ENCODE measurements at regions of chr5 and their contacts with region 1.

Region 1: DNA sequence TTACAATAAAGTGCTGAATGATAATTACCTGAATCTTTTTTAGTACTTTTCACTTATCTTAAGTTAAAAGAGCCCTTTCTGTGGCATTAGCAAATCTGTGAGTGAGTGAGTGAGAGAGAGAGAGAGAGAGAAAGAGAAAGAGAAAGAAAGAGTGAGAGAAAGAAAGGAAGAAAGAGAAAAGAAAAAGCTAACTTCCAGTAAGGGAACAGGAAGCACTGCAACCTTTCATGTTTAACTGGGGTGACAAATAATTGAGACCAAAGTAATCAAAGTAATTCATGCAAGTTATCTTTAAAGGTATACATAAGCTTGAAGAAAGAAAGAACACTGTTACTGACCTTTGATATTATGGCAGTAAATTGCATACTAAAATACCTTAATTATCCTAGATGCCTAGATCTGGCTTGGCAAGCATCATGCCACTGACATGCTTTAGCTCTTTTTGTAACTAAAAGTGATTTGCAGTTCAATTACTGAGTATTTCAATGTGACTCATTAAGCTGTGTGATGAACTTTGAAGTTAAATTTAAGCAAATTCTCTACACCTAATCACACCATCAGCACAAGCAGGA is 21.7 kb downstream of the FEM1C start:
- DNase-seq: no peak
- H3K4me3 ChIP-seq: no peak overlapping the region
- H3K4me3 Mint-ChIP-seq: peak overlapping the region in 4 of 8 donors; percentile 1 to 40 (median 2)
- H3K27ac ChIP-seq: no peak overlapping the region
- H3K27ac Mint-ChIP-seq: peak overlapping the region in 2 of 7 donors; percentile 6 to 50
- H3K4me1 ChIP-seq: peaks cover 13% of the 10 kb centered on the region
- H3K4me1 Mint-ChIP-seq: peaks cover 26 to 43% (median 31%) of the 10 kb centered on the region in 4 donors
- H3K27me3 ChIP-seq: no peaks in the 10 kb centered on the region
- H3K27me3 Mint-ChIP-seq: no peaks in the 10 kb centered on the region

Region 2: DNA sequence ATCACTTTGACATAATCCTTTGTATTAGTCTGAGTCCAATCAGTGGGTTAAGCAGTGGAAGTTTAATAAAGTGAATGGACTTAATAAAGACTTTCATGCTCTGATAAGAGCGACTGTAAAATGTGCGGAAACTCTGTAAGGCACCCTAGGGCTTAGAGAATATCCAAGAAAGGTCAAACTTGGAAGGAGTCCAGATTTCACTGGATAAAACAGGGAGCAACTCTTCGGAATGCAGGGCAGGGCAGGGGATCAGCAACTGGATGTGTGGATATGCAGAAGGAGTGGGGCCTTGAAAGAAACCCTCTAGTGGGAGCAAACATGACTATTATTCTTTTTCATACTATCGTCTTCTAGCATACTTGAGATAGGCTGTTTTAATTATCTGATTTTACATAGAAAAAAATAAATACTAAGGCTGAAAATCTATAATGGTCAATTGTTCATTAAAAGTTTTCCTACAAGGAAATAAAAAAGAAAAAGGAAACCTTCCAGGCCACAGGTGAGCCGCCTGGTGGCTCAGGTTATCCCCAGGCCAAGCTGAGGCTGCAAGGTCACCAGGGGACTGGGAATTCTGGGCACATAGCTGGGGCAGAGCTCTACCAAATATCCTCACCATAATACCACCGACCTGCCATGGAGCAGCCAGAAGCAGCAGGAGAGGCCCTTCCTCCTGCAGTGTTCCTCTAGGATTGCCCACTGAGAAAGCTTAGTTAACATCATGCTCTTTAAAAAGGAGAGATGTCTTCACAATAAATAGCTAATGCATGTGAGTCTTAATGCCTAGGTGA is 180.1 kb before region 1 on chr5:
- CTCF ChIA-PET with region 1: no interaction called
- POLR2A ChIA-PET with region 1: no interaction called
- intact Hi-C with region 1: no loop called
- DNase-seq: no peak
- H3K4me3 ChIP-seq: no peak overlapping the region
- H3K4me3 Mint-ChIP-seq: no peak overlapping the region
- H3K27ac ChIP-seq: no peak overlapping the region
- H3K27ac Mint-ChIP-seq: no peak overlapping the region
- H3K4me1 ChIP-seq: no peaks in the 10 kb centered on the region
- H3K4me1 Mint-ChIP-seq: no peaks in the 10 kb centered on the region
- H3K27me3 ChIP-seq: no peaks in the 10 kb centered on the region
- H3K27me3 Mint-ChIP-seq: peaks cover 7 to 25% of the 10 kb centered on the region in 2 donors

Region 3: GRCh38 chr5:115432691-115433090 is 90.2 kb before region 1 on chr5:
- CTCF ChIA-PET with region 1: no interaction called
- POLR2A ChIA-PET with region 1: no interaction called
- intact Hi-C with region 1: no loop called
- DNase-seq: no peak
- H3K4me3 ChIP-seq: no peak overlapping the region
- H3K4me3 Mint-ChIP-seq: no peak overlapping the region
- H3K27ac ChIP-seq: no peak overlapping the region
- H3K27ac Mint-ChIP-seq: no peak overlapping the region
- H3K4me1 ChIP-seq: no peaks in the 10 kb centered on the region
- H3K4me1 Mint-ChIP-seq: no peaks in the 10 kb centered on the region
- H3K27me3 ChIP-seq: no peaks in the 10 kb centered on the region
- H3K27me3 Mint-ChIP-seq: peaks cover 0 to 8% of the 10 kb centered on the region in 2 donors

Region 4: GRCh38 chr5:115535479-115536035 is 12.6 kb after region 1 on chr5:
- CTCF ChIA-PET with region 1: no interaction called
- POLR2A ChIA-PET with region 1: no interaction called
- intact Hi-C with region 1: loop called (anchors 2 kb)
- DNase-seq: no peak
- H3K4me3 ChIP-seq: no peak overlapping the region
- H3K4me3 Mint-ChIP-seq: peak overlapping the region in 6 of 8 donors; percentile 9 to 71 (median 40)
- H3K27ac ChIP-seq: no peak overlapping the region
- H3K27ac Mint-ChIP-seq: peak overlapping the region in 1 of 7 donors; percentile 47
- H3K4me1 ChIP-seq: peaks cover 90% of the 10 kb centered on the region
- H3K4me1 Mint-ChIP-seq: peaks cover 67 to 89% (median 78%) of the 10 kb centered on the region in 4 donors
- H3K27me3 ChIP-seq: no peaks in the 10 kb centered on the region
- H3K27me3 Mint-ChIP-seq: no peaks in the 10 kb centered on the region

Region 5: DNA sequence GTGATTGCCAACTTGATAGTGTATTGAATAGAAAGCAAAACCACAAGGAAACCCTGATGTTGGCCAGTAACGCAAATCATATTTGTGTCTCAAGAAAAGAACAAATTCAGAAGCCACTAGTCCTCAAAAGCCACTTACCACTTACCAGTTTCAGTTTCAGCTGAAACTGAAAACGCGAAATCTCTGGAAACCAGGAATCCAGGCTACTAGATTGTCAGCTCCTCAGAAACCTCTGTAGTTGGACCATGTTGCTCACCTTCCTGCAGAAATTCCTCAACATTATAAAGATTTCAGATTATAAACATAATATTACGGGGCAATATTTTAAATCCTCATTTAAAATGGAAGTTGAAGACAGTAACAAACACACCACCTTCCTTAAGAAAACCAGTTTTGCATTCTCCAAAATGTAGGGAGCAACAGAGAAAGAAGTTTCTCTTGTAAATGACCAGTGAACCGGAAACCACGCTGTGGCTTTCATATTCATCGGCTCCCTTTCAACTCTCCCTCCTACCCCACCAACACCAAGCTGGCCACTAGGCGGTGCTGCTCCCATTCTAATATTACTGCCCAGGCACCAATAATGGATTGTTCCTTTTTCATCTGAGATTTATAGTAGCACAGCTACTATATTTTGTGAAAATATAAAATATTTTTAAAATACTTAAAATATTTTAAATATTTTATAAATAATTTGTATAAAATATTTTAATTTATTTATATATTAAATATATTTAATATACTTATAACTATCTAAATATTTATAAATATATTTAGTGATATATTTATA is 111.6 kb after region 1 on chr5:
- CTCF ChIA-PET with region 1: no interaction called
- POLR2A ChIA-PET with region 1: no interaction called
- intact Hi-C with region 1: no loop called
- DNase-seq: peak; percentile 72 to 78 (median 75)
- H3K4me3 ChIP-seq: peak overlapping the region in 1 of 2 donors; percentile 10
- H3K4me3 Mint-ChIP-seq: peak overlapping the region; percentile 45 to 87 (median 72)
- H3K27ac ChIP-seq: peak overlapping the region; percentile 26
- H3K27ac Mint-ChIP-seq: peak overlapping the region in 6 of 7 donors; percentile 42 to 85 (median 60)
- H3K4me1 ChIP-seq: peaks cover 7% of the 10 kb centered on the region
- H3K4me1 Mint-ChIP-seq: peaks cover 6 to 7% (median 6%) of the 10 kb centered on the region in 4 donors
- H3K27me3 ChIP-seq: no peaks in the 10 kb centered on the region
- H3K27me3 Mint-ChIP-seq: peaks cover 0 to 2% of the 10 kb centered on the region in 2 donors

Measured in CD4-positive, alpha-beta memory T cell (primary cell).